ENCODE measurements at regions of chr4 and their contacts with region 1.

Region 1: GRCh38 chr4:84220990-84221389 is 278.1 kb downstream of the NKX6-1 start:
- DNase-seq: no peak
- H3K4me3 Mint-ChIP-seq: no peak overlapping the region
- H3K27ac Mint-ChIP-seq: no peak overlapping the region
- H3K4me1 Mint-ChIP-seq: no peaks in the 10 kb centered on the region
- H3K27me3 Mint-ChIP-seq: no peaks in the 10 kb centered on the region

Region 2: GRCh38 chr4:84866295-84866694 is 645.3 kb after region 1 on chr4:
- intact Hi-C with region 1: loop called (anchors 5 kb)
- DNase-seq: no peak
- H3K4me3 Mint-ChIP-seq: no peak overlapping the region
- H3K27ac Mint-ChIP-seq: no peak overlapping the region
- H3K4me1 Mint-ChIP-seq: no peaks in the 10 kb centered on the region
- H3K27me3 Mint-ChIP-seq: no peaks in the 10 kb centered on the region